Esophagus muscularis mucosa (tissue), 4 donors: ENCODE measurements at regions of chr10 and their contacts with region 1.

Region 1: DNA sequence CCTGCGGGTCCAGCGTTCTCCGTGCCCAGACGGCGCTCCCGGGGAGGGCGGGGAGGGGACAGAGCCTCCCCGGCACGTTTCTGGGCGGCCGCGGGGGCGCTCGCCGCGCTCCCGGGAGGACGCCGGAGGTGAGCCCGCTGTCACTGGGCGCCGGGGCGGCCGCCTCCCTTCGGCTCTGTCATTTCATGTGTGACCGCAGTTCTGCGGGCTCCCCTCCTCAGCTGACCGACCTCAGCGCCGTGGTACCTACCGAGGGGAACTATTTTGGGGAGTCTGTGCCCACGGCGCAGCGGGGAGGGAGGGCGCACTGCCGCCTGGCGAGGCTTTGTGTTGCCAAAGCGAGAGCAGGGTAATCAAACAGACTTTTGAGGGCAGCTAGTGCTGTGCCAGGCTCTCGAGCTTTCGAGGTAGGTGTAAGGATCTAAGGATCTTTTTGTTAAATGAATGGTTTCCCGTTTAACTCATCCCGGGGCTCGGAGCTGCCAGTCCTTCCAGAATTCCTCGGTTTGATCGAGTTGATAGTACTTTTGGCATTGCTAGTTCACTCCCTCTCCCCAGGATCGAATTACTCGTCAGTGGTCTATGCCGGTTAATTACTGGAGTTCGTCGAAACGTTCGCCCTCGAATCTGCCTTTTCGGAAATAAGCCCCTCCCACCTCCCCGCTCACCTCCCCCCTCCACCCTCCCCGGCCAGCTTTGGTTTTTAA is 1.9 kb downstream of the ARID5B start:
- DNase-seq: no peak
- H3K4me3 ChIP-seq: peak overlapping the region; percentile 66 to 81 (median 76)
- H3K27ac ChIP-seq: peak overlapping the region; percentile 91 to 98 (median 94)
- H3K4me1 ChIP-seq: peaks cover 12 to 49% (median 41%) of the 10 kb centered on the region in 4 donors
- H3K27me3 ChIP-seq: no peaks in the 10 kb centered on the region
- CTCF ChIP-seq: peak; percentile 22 to 33 (median 23)
- EP300 ChIP-seq: no peak
- POLR2A ChIP-seq: no peak

Region 2: GRCh38 chr10:61869774-61870525 is 33.4 kb before region 1 on chr10:
- intact Hi-C with region 1: no loop called
- DNase-seq: no peak
- H3K4me3 ChIP-seq: no peak overlapping the region
- H3K27ac ChIP-seq: peak overlapping the region in 3 of 4 donors; percentile 37 to 51 (median 38)
- H3K4me1 ChIP-seq: peaks cover 0 to 23% (median 19%) of the 10 kb centered on the region in 4 donors
- H3K27me3 ChIP-seq: no peaks in the 10 kb centered on the region
- CTCF ChIP-seq: no peak
- EP300 ChIP-seq: no peak
- POLR2A ChIP-seq: no peak

Region 3: GRCh38 chr10:61992671-61993668 is 89.6 kb after region 1 on chr10:
- intact Hi-C with region 1: loop called (anchors 5 kb)
- DNase-seq: peak; percentile 93
- H3K4me3 ChIP-seq: peak overlapping the region; percentile 10 to 38 (median 24)
- H3K27ac ChIP-seq: peak overlapping the region; percentile 68 to 77 (median 75)
- H3K4me1 ChIP-seq: peaks cover 35 to 58% (median 52%) of the 10 kb centered on the region in 4 donors
- H3K27me3 ChIP-seq: no peaks in the 10 kb centered on the region
- CTCF ChIP-seq: no peak
- EP300 ChIP-seq: peak; percentile 88
- POLR2A ChIP-seq: no peak